Sigmoid colon (tissue), 7 donors: ENCODE measurements at regions of chr15 and their contacts with region 1.

Region 1: GRCh38 chr15:51162865-51163762 is 68.4 kb upstream of the TNFAIP8L3 start:
- DNase-seq: peak; percentile 77
- H3K4me3 ChIP-seq: peak overlapping the region in 3 of 4 donors; percentile 5 to 10 (median 8)
- H3K27ac ChIP-seq: peak overlapping the region in 2 of 4 donors; percentile 14 to 32
- H3K4me1 ChIP-seq: peaks cover 0 to 10% (median 8%) of the 10 kb centered on the region in 4 donors
- H3K27me3 ChIP-seq: no peaks in the 10 kb centered on the region
- CTCF ChIP-seq: peak; percentile 54 to 98 (median 81)
- EP300 ChIP-seq: no peak
- POLR2A ChIP-seq: no peak

Region 2: DNA sequence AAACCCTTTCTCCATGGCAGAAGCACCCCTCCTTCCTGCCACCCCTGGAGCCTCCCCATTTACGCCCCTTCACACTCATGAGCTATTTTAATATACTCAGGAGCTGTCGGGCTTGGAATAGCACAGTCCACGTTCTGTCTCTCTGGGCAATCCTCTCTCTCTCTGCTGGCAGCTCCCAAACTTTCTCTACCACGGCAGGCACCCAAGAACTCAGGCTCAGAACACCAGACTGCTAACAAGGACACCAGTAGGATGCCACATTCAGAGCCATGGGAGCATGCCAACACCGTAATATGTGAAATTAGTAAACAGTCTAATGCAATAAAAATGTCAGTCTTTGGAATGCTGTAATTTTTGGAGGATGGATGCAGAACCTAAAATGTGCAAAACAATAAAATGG is 87.8 kb before region 1 on chr15:
- intact Hi-C with region 1: no loop called
- DNase-seq: peak; percentile 87
- H3K4me3 ChIP-seq: no peak overlapping the region
- H3K27ac ChIP-seq: peak overlapping the region; percentile 19 to 73 (median 62)
- H3K4me1 ChIP-seq: peaks cover 0 to 41% (median 24%) of the 10 kb centered on the region in 4 donors
- H3K27me3 ChIP-seq: no peaks in the 10 kb centered on the region
- CTCF ChIP-seq: no peak
- EP300 ChIP-seq: no peak
- POLR2A ChIP-seq: no peak

Region 3: GRCh38 chr15:51093839-51094605 is 69.1 kb before region 1 on chr15:
- intact Hi-C with region 1: no loop called
- DNase-seq: peak; percentile 69
- H3K4me3 ChIP-seq: peak overlapping the region; percentile 49 to 67 (median 62)
- H3K27ac ChIP-seq: peak overlapping the region; percentile 61 to 87 (median 74)
- H3K4me1 ChIP-seq: peaks cover 0 to 29% (median 24%) of the 10 kb centered on the region in 4 donors
- H3K27me3 ChIP-seq: peaks cover 0 to 6% (median 5%) of the 10 kb centered on the region in 3 donors
- CTCF ChIP-seq: no peak
- EP300 ChIP-seq: no peak
- POLR2A ChIP-seq: no peak

Region 4: GRCh38 chr15:51192521-51193280 is 29.6 kb after region 1 on chr15:
- intact Hi-C with region 1: loop called (anchors 1 kb)
- DNase-seq: peak; percentile 92
- H3K4me3 ChIP-seq: no peak overlapping the region
- H3K27ac ChIP-seq: no peak overlapping the region
- H3K4me1 ChIP-seq: peaks cover 0 to 7% (median 6%) of the 10 kb centered on the region in 4 donors
- H3K27me3 ChIP-seq: peaks cover 0 to 19% (median 3%) of the 10 kb centered on the region in 3 donors
- CTCF ChIP-seq: peak; percentile 55 to 94 (median 84)
- EP300 ChIP-seq: no peak
- POLR2A ChIP-seq: no peak